ENCODE measurements at regions of chr4 and their contacts with region 1.

Region 1: GRCh38 chr4:15956179-15956850 is 6.7 kb downstream of the FGFBP2 start:
- DNase-seq: peak; percentile 89
- H3K4me3 Mint-ChIP-seq: no peak overlapping the region
- H3K27ac Mint-ChIP-seq: no peak overlapping the region
- H3K4me1 Mint-ChIP-seq: peaks cover 10% of the 10 kb centered on the region
- H3K27me3 Mint-ChIP-seq: no peaks in the 10 kb centered on the region
- CTCF ChIP-seq: peak; percentile 92

Region 2: GRCh38 chr4:15479089-15479912 is 477.0 kb before region 1 on chr4:
- CTCF ChIA-PET with region 1: interaction called, 22 read pairs
- POLR2A ChIA-PET with region 1: no interaction called
- intact Hi-C with region 1: loop called (anchors 1 kb)
- DNase-seq: peak; percentile 87
- H3K4me3 Mint-ChIP-seq: peak overlapping the region; percentile 76
- H3K27ac Mint-ChIP-seq: peak overlapping the region; percentile 59
- H3K4me1 Mint-ChIP-seq: peaks cover 13% of the 10 kb centered on the region
- H3K27me3 Mint-ChIP-seq: no peaks in the 10 kb centered on the region
- CTCF ChIP-seq: peak; percentile 63

Region 3: DNA sequence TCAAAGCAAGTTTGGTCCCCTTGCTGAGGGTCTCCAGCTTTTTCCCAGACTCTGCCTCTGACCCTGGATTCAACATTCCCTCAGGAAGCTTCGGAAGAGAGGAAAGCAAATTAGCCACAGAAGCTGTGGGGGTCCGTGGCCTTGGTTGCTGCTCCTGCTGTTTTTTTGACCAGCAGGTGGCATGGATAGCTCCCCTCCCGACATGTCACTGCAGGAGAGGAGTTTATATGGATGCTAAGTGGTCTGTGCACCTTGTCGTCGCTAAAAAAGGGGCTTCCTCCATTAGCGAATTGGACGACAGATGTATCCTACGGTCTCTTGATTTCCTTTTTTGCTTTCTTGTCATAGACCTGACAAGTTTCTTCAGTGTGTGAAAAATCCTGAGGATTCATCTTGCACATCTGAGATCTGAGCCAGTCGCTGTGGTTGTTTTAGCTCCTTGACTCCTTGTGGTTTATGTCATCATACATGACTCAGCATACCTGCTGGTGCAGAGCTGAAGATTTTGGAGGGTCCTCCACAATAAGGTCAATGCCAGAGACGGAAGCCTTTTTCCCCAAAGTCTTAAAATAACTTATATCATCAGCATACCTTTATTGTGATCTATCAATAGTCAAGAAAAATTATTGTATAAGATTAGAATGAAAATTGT is 108.0 kb before region 1 on chr4:
- CTCF ChIA-PET with region 1: interaction called, 15 read pairs
- POLR2A ChIA-PET with region 1: no interaction called
- intact Hi-C with region 1: no loop called
- DNase-seq: peak; percentile 25
- H3K4me3 Mint-ChIP-seq: no peak overlapping the region
- H3K27ac Mint-ChIP-seq: no peak overlapping the region
- H3K4me1 Mint-ChIP-seq: peaks cover 9% of the 10 kb centered on the region
- H3K27me3 Mint-ChIP-seq: no peaks in the 10 kb centered on the region
- CTCF ChIP-seq: no peak

Region 4: GRCh38 chr4:15893962-15894361 is 62.4 kb before region 1 on chr4:
- CTCF ChIA-PET with region 1: interaction called, 23 read pairs
- POLR2A ChIA-PET with region 1: interaction called, 3 read pairs
- intact Hi-C with region 1: no loop called
- DNase-seq: peak; percentile 97
- H3K4me3 Mint-ChIP-seq: no peak overlapping the region
- H3K27ac Mint-ChIP-seq: peak overlapping the region; percentile 99
- H3K4me1 Mint-ChIP-seq: peaks cover 29% of the 10 kb centered on the region
- H3K27me3 Mint-ChIP-seq: no peaks in the 10 kb centered on the region
- CTCF ChIP-seq: no peak

Region 5: DNA sequence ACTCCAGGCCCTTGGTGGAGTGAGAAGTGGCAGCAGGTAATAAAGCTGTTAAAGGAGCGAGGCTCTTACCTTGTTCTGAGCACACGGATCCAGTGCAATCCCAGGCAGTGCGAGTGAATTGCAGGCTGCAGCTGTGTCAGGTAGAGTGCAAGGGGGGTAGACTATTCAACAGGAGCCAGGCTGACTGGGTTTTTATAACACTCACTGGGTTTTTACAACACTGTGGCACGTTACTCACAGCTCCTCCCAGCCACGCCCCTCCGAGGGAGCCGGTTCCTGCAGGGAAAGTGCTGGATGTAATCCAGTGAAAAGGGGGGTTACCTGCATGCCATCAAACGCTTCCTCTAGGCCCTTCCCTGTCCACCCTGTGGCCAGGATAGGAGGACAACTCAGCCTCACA is 18.1 kb before region 1 on chr4:
- CTCF ChIA-PET with region 1: interaction called, 12 read pairs
- POLR2A ChIA-PET with region 1: interaction called, 3 read pairs
- intact Hi-C with region 1: no loop called
- DNase-seq: peak; percentile 80
- H3K4me3 Mint-ChIP-seq: peak overlapping the region; percentile 58
- H3K27ac Mint-ChIP-seq: no peak overlapping the region
- H3K4me1 Mint-ChIP-seq: peaks cover 30% of the 10 kb centered on the region
- H3K27me3 Mint-ChIP-seq: no peaks in the 10 kb centered on the region
- CTCF ChIP-seq: no peak

Region 6: DNA sequence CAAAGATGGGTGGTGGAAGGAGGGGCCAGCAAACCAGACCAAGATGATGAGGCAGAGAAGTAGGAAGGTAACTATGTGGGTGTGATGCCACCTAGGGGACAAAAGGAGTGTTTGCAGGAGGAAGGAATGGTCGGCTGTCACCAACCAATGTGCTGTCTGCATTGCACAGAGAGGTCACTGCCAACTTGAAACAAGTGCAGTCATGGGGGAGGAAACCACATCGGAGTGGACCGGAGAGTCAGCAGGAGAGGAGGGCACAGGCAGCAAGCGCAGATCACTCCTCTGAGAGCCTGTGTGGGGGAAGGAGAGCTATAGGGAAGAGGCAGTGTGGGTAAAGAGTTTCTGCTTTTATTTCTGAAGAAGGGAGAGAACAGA is 45.2 kb after region 1 on chr4:
- CTCF ChIA-PET with region 1: interaction called, 13 read pairs
- POLR2A ChIA-PET with region 1: no interaction called
- intact Hi-C with region 1: loop called (anchors 2 kb)
- DNase-seq: peak; percentile 75
- H3K4me3 Mint-ChIP-seq: no peak overlapping the region
- H3K27ac Mint-ChIP-seq: no peak overlapping the region
- H3K4me1 Mint-ChIP-seq: no peaks in the 10 kb centered on the region
- H3K27me3 Mint-ChIP-seq: no peaks in the 10 kb centered on the region
- CTCF ChIP-seq: peak; percentile 94

Region 7: DNA sequence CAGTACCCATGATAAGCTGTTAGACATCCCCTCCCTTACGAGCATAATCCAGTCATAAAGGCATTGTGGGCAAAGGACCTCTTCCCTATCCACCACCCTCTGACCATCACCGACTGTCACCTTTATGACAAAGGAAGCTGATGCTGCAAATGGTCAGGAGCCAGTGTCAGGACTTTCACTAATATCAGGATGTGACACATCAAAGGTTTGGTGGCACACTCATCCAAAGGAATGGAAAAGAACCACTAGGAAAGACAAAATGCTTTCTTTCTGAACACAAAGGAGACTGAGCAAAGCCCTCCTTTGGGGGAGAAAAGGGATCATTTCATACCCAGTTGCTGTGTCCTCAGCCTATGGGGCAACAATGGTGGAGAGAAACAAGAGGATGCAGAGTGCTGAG is 194.4 kb after region 1 on chr4:
- CTCF ChIA-PET with region 1: no interaction called
- POLR2A ChIA-PET with region 1: no interaction called
- intact Hi-C with region 1: no loop called
- DNase-seq: no peak
- H3K4me3 Mint-ChIP-seq: no peak overlapping the region
- H3K27ac Mint-ChIP-seq: no peak overlapping the region
- H3K4me1 Mint-ChIP-seq: no peaks in the 10 kb centered on the region
- H3K27me3 Mint-ChIP-seq: no peaks in the 10 kb centered on the region
- CTCF ChIP-seq: no peak

Measured in MCF 10A (cell line).